ENCODE measurements at regions of chr3 and their contacts with region 1.

Region 1: DNA sequence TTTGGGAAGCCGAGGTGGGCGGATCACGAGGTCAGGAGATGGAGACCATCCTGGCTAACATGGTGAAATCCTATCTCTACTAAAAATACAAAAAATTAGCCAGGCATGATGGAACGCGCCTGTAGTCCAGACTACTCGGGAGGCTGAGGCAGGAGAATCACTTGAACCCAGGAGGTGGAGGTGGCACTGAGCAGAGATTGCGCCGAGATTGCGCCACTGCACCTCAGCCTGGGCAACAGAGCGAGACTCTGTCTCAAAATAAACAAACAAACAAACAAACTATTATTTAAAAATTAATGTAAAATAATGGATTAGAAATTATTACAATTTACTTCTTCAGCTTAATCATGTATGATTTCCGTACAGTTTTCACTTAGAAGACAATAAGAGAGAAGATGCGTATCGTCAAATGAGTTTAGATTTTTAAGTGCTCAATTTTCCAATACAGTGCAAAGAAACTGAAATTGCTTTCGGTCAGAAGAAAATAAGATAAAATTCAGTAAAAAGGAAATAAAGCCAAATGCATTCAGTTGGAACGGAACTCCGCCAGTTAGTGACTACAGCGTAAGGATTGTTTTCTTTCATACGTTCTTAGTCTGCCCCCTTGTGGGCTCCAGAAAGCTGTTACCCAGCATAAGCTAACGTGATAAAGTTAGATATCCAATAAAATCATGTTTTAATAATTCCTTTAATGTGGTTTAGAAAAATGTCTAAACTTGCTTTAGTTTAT is 24.8 kb downstream of the AADAC start:
- DNase-seq: peak in 5 of 10 donors; percentile 18 to 55 (median 38)
- H3K4me3 ChIP-seq: peak overlapping the region in 55 of 59 donors; percentile 2 to 61 (median 40)
- H3K27ac ChIP-seq: no peak overlapping the region
- H3K27me3 ChIP-seq: no peaks in the 10 kb centered on the region
- CTCF ChIP-seq: peak; percentile 69 to 99 (median 89)

Region 2: DNA sequence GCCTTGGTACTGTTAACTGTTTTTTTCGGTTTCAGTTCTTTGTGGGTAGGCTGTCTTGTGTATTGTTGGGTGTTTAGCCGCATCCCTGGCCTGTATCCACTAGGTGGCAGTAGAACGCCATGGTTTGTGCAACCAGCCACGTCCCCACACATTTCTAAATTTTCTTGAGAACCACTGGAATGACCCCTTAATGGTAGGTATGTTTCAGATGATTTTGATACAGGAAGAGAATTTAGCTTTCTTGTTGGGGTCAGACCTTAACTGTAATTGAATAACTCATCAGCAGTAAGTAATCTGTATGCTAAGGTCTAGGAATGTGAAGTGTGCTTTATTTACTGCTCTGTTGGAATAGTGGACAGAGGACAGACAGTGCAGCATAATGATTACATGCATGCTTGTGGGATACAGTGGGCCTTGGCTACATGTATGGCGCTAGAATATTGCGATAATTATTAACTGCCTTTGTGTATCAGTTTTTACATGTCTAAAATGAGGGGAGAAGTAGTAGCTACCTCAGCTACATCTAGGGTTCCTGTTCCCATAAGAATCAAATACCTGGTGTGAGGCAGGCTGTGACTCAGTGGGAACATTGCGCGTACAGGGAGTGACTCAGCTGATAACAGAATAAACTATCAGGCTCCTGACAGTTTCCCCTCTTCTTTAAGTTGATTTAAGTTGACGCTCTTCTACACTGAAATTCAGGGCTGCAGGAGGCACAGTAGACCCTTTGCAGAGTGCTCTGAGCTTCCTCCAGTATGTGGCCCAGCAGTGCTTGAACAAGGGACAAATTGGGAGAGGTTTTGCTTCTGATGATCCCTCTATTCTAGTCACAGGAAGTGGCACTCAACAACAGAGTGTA is 610.7 kb before region 1 on chr3:
- intact Hi-C with region 1: loop called in 1 of 2 experiments (anchors 5 kb)
- DNase-seq: peak; percentile 58 to 86 (median 74)
- H3K4me3 ChIP-seq: peak overlapping the region in 5 of 59 donors; percentile 6 to 26 (median 9)
- H3K27ac ChIP-seq: peak overlapping the region in 53 of 59 donors; percentile 11 to 76 (median 46)
- H3K27me3 ChIP-seq: no peaks in the 10 kb centered on the region
- CTCF ChIP-seq: peak; percentile 83 to 98 (median 93)

Region 3: DNA sequence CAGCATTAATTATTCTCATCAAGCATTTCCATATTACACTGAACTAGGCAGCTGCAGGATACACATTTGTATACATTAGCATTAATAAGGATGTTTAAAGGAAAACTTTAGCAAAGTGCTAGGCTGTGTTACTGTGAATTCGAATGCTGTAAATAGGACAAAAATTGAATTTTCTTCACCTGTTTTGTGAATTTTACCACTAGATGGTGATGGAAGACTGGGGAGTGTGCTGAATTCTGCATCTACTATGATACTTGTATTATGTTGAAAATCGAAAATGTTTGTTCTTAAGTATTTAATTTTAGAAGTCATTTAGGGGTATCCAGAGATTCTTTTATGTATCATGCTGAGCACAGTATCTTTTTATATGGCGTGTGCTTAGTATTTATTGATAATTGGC is 548.1 kb before region 1 on chr3:
- intact Hi-C with region 1: loop called in 1 of 2 experiments (anchors 10 kb)
- DNase-seq: no peak
- H3K4me3 ChIP-seq: peak overlapping the region in 3 of 59 donors; percentile 14 to 26 (median 16)
- H3K27ac ChIP-seq: no peak overlapping the region
- H3K27me3 ChIP-seq: no peaks in the 10 kb centered on the region
- CTCF ChIP-seq: peak in 52 of 56 donors; percentile 15 to 68 (median 44)

Region 4: GRCh38 chr3:151439652-151440129 is 399.1 kb before region 1 on chr3:
- intact Hi-C with region 1: loop called (anchors 5 kb)
- DNase-seq: no peak
- H3K4me3 ChIP-seq: no peak overlapping the region
- H3K27ac ChIP-seq: no peak overlapping the region
- H3K27me3 ChIP-seq: no peaks in the 10 kb centered on the region
- CTCF ChIP-seq: peak; percentile 72 to 97 (median 92)